HCT116 (cell line): ENCODE measurements at regions of chr17 and their contacts with region 1.

Region 1: DNA sequence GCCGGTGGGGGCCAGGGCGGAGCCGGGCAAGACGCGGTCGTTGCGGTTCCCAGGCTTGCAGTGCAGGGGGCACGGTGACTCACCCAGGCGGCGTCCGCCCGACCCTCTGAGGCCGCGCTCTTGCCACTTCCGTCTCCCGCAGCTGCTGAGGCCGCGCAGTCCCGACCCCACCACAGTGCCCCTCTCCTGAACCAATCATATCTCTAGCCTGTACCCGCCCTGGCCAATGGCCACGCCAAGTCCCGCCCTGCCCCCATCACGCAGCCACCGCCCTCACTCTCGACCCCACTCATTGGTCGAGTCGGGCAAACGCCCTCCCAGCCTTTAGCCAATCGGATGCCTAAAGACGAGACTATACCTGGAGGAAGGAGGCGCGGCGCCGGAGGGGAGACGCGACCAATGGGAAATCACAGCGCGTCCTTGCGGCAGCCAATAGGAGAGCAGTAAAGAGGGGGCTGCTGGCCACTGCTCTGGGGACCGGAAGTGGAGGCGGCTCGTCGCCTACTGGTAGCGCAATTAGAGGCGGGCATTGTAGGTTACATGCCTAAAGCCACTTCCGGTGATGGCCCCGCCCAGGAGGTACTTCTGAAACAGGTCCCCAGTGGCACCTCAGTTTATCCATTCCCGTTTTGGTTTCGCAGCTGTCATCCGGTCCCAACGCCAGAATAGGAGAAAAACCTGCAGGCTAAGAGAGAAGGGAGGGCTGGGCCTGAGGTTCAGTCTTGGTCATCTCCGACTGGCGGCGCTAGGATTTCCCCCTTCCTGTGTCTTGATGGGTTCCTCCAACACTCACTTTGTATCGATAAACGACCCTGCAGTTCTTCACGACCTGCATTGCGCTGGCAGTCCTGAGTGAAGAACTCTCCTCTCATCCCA is 3.5 kb upstream of the MTMR4 start:
- DNase-seq: peak; percentile 100
- ATAC-seq: peak; percentile 80
- H3K4me3 ChIP-seq: peak overlapping the region; percentile 72 to 85
- H3K27ac ChIP-seq: peak overlapping the region; percentile 76
- H3K4me1 ChIP-seq: peaks cover 21 to 41% of the 10 kb centered on the region in 2 experiments
- H3K27me3 ChIP-seq: no peaks in the 10 kb centered on the region
- CTCF ChIP-seq: no peak
- POLR2A ChIP-seq: peak; percentile 42
- RAD21 ChIP-seq: no peak

Region 2: GRCh38 chr17:58317421-58318064 is 200.4 kb before region 1 on chr17:
- CTCF ChIA-PET with region 1: interaction called, 14 read pairs
- POLR2A ChIA-PET with region 1: no interaction called
- RAD21 ChIA-PET with region 1: no interaction called
- intact Hi-C with region 1: loop called (anchors 5 kb)
- DNase-seq: peak; percentile 72
- ATAC-seq: peak; percentile 95
- H3K4me3 ChIP-seq: no peak overlapping the region
- H3K27ac ChIP-seq: peak overlapping the region; percentile 30; the same call in 1 of the 2 replicates
- H3K4me1 ChIP-seq: peaks cover 8 to 17% of the 10 kb centered on the region in 2 experiments; a peak in 3 of 4 replicates
- H3K27me3 ChIP-seq: no peaks in the 10 kb centered on the region
- CTCF ChIP-seq: peak; percentile 97 to 99 (median 99)
- POLR2A ChIP-seq: no peak
- RAD21 ChIP-seq: peak; percentile 100

Region 3: GRCh38 chr17:58658804-58659713 is 141.1 kb after region 1 on chr17:
- CTCF ChIA-PET with region 1: no interaction called
- POLR2A ChIA-PET with region 1: interaction called, 20 read pairs
- RAD21 ChIA-PET with region 1: interaction called in 1 of 2 experiments, 3 read pairs
- intact Hi-C with region 1: loop called (anchors 1 kb)
- DNase-seq: peak; percentile 100
- ATAC-seq: peak; percentile 86
- H3K4me3 ChIP-seq: peak overlapping the region; percentile 33 to 34
- H3K27ac ChIP-seq: peak overlapping the region; percentile 69
- H3K4me1 ChIP-seq: peaks cover 15 to 22% of the 10 kb centered on the region in 2 experiments
- H3K27me3 ChIP-seq: no peaks in the 10 kb centered on the region
- CTCF ChIP-seq: no peak
- POLR2A ChIP-seq: peak; percentile 100
- RAD21 ChIP-seq: peak; percentile 55

Region 4: GRCh38 chr17:58692239-58693055 is 174.5 kb after region 1 on chr17 and contains the start of gene RAD51C:
- CTCF ChIA-PET with region 1: interaction called, 5 read pairs
- POLR2A ChIA-PET with region 1: no interaction called
- RAD21 ChIA-PET with region 1: no interaction called
- intact Hi-C with region 1: loop called (anchors 1 kb)
- DNase-seq: peak; percentile 93
- ATAC-seq: peak; percentile 98
- H3K4me3 ChIP-seq: peak within 1 kb of the TSS; percentile 59 to 77
- H3K27ac ChIP-seq: peak within 1 kb of the TSS; percentile 69
- H3K4me1 ChIP-seq: peaks cover 13 to 18% of the 10 kb centered on the region in 2 experiments; a peak in 3 of 4 replicates
- H3K27me3 ChIP-seq: no peaks in the 10 kb centered on the region
- CTCF ChIP-seq: no peak
- POLR2A ChIP-seq: peak; percentile 97
- RAD21 ChIP-seq: peak; percentile 27
- total RNA-seq, gene RAD51C: 94.9 TPM

Region 5: GRCh38 chr17:59106463-59107305 is 588.7 kb after region 1 on chr17 and contains the start of gene TRIM37:
- CTCF ChIA-PET with region 1: no interaction called
- POLR2A ChIA-PET with region 1: no interaction called
- RAD21 ChIA-PET with region 1: no interaction called
- intact Hi-C with region 1: loop called (anchors 10 kb)
- DNase-seq: peak; percentile 100
- ATAC-seq: peak; percentile 96
- H3K4me3 ChIP-seq: peak within 1 kb of the TSS; percentile 65 to 86
- H3K27ac ChIP-seq: peak within 1 kb of the TSS; percentile 80
- H3K4me1 ChIP-seq: peaks cover 12 to 19% of the 10 kb centered on the region in 2 experiments
- H3K27me3 ChIP-seq: no peaks in the 10 kb centered on the region
- CTCF ChIP-seq: 0 out of 6 replicates have a peak, but pooled peaks of 1 of the 3 experiments have one; percentile 5
- POLR2A ChIP-seq: peak; percentile 84
- RAD21 ChIP-seq: no peak
- total RNA-seq, gene TRIM37: 55.7 TPM